Posterior vena cava (tissue), 2 donors: ENCODE measurements at regions of chr16 and their contacts with region 1.

Region 1: DNA sequence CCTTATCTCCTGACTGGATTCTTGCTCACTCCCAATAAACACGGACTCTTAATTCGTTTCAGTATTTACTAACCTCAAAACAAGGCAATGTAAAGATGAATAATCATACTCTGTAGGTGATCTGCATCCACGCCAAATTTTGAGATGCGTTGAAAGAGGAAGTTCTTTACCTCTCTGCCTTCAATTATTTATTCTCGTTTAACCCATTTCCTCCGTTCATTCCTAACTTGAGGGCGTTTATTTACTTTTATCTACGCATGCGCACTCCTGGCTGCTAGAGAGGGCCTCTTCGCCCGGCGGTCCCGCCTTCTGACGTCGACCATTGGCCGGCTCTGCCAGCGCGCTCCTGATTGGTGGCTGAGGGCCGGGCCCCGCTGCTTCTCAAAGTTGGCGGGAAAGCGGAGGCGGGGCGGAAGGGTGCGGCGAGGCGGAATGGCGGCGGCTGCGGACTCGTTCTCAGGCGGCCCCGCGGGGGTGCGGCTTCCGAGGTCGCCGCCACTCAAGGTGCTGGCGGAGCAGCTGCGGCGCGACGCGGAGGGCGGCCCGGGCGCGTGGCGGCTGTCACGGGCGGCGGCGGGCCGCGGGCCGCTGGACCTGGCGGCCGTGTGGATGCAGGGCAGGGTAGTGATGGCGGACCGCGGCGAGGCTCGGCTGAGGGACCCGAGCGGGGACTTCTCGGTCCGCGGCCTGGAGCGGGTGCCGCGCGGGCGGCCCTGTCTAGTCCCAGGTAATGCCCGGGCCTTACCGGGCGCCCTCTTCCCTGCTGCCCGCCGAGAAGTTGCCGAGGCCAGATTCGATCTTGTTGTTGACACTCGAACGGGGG is at the start of gene RMI2:
- DNase-seq: peak; percentile 99
- total RNA-seq, gene RMI2: 0.67 to 1.4 TPM

Region 2: GRCh38 chr16:10616730-10617555 is 728.3 kb before region 1 on chr16:
- intact Hi-C with region 1: no loop called
- DNase-seq: no peak

Region 3: GRCh38 chr16:11076259-11077018 is 268.8 kb before region 1 on chr16:
- intact Hi-C with region 1: loop called in 1 of 2 experiments (anchors 5 kb)
- DNase-seq: peak; percentile 57

Region 4: DNA sequence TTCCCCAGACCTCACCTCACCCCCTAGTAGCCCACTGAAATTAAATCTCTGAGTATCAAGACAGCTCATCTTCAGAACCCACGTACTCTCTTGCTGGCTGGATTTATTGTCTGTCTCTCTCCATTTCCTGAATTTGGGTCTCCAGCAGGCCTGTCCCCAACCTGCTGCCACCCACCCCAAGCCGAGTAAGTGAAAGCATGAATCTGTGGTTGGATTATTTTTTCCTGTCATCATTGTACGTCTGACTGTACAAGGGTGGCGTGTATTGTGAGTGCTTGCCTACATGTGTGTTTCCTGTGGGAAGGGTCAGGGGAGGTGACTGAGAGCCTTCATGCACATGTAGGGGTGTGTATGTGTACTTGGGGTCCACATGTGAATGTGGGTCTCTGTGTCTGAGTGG is 81.5 kb before region 1 on chr16:
- intact Hi-C with region 1: loop called in 1 of 2 experiments (anchors 10 kb)
- DNase-seq: no peak

Region 5: GRCh38 chr16:11283820-11284248 is 61.4 kb before region 1 on chr16:
- intact Hi-C with region 1: no loop called
- DNase-seq: no peak

Region 6: DNA sequence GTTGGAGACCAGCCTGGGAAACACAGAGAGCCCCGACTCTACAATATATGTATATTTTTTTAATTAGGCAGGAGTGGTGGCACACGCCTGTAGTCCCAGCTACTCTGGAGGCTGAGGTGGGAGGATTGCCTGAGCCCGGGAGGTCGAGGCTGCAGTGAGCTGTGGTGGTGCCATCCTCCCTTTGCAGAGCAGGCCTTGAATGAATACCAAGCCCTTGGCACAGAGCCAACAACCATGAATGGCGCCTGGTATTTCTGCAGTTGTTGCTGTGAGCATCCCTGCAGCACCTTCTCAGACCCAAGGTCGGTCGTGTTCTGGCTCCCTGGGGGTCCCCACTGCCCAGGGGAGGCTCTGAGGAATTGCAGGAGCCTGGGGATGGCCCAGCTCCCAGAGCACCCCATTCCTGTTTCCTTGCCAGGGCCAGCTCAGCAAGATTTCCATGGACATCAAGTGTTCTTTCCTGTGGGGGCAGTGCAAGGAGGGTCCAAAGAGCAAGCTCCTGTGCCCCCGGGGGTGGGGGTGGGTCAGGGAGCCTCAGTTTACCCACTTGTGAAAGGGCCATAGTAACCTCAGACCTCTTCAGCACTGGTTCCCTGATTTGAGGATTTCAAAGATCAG is 25.6 kb before region 1 on chr16:
- intact Hi-C with region 1: no loop called
- DNase-seq: no peak